Esophagus muscularis mucosa (tissue), 4 donors: ENCODE measurements at regions of chr19 and their contacts with region 1.

Region 1: DNA sequence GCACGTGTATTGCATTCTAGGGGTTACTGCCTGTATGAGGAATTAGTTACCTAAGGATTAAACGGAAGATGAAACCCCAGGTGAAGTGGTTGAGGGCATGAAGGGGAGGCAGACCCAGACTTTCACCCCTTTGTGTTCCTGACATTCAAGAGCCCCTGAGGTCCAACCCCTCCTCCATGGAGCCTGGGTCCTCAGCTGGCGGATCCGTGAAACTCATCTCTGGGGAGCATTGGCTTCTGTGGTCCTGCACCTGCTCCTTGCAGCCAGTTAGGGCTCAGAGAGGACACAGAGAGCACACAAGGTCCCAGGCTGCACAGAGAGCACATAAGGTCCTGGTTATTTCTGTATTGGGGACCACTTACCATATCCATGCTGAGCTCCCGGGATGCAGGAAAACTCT is 7.0 kb upstream of the LILRA1 start:
- DNase-seq: peak; percentile 74
- H3K4me3 ChIP-seq: no peak overlapping the region
- H3K27ac ChIP-seq: no peak overlapping the region
- H3K4me1 ChIP-seq: no peaks in the 10 kb centered on the region
- H3K27me3 ChIP-seq: peaks cover 0 to 16% (median 0%) of the 10 kb centered on the region in 4 donors
- CTCF ChIP-seq: no peak
- EP300 ChIP-seq: no peak
- POLR2A ChIP-seq: no peak

Region 2: DNA sequence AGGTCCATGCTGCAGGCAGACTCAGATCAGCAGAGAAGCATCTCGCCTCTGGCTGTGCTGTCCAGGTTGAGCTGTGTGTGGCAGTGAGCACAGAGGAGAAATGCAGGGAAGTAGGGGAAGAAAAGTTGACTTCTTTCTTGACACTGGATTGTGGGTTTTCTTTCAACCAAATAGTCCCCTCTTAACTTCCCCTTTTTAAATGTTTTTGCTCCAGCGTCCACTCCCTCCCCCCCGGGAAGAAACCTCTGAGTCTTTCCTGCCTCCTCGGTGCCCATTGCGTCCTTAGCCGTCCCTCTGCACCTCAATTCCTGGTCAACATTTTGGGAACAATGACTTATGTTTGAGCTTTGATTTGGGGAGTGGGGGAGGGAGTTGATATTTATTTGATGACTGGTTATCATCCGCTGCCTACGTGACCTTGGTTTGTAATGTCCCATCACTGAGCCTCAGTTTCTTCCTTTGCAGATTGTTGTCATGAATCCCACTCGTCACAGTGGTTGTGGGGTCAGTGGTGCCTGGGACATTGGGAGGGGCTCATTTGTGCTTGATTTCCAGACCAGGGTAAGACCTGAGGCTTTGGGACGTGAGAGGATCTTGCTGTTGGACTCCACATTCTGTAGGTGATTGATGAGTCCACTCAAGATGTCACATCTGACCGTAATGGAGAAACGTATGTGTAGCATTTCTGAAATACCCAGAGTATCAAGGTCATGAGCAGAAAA is 305.2 kb before region 1 on chr19 and contains the start of gene LILRB2:
- intact Hi-C with region 1: loop called (anchors 2 kb)
- DNase-seq: no peak
- H3K4me3 ChIP-seq: peak within 1 kb of the TSS in 2 of 4 donors; percentile 22 to 39
- H3K27ac ChIP-seq: no peak within 1 kb of the TSS
- H3K4me1 ChIP-seq: peaks cover 0 to 4% (median 0%) of the 10 kb centered on the region in 4 donors
- H3K27me3 ChIP-seq: peaks cover 0 to 82% (median 0%) of the 10 kb centered on the region in 4 donors
- CTCF ChIP-seq: no peak
- EP300 ChIP-seq: no peak
- POLR2A ChIP-seq: no peak
- total RNA-seq, gene LILRB2: 2.1 to 5.6 (median 2.6) TPM

Region 3: GRCh38 chr19:54653181-54653809 is 66.9 kb after region 1 on chr19:
- intact Hi-C with region 1: no loop called
- DNase-seq: no peak
- H3K4me3 ChIP-seq: no peak overlapping the region
- H3K27ac ChIP-seq: no peak overlapping the region
- H3K4me1 ChIP-seq: no peaks in the 10 kb centered on the region
- H3K27me3 ChIP-seq: peaks cover 0 to 39% (median 0%) of the 10 kb centered on the region in 4 donors
- CTCF ChIP-seq: peak in 2 of 3 experiments; percentile 29 to 43
- EP300 ChIP-seq: no peak
- POLR2A ChIP-seq: no peak